Esophagus muscularis mucosa (tissue), 4 donors: ENCODE measurements at regions of chr19 and their contacts with region 1.

Region 1: DNA sequence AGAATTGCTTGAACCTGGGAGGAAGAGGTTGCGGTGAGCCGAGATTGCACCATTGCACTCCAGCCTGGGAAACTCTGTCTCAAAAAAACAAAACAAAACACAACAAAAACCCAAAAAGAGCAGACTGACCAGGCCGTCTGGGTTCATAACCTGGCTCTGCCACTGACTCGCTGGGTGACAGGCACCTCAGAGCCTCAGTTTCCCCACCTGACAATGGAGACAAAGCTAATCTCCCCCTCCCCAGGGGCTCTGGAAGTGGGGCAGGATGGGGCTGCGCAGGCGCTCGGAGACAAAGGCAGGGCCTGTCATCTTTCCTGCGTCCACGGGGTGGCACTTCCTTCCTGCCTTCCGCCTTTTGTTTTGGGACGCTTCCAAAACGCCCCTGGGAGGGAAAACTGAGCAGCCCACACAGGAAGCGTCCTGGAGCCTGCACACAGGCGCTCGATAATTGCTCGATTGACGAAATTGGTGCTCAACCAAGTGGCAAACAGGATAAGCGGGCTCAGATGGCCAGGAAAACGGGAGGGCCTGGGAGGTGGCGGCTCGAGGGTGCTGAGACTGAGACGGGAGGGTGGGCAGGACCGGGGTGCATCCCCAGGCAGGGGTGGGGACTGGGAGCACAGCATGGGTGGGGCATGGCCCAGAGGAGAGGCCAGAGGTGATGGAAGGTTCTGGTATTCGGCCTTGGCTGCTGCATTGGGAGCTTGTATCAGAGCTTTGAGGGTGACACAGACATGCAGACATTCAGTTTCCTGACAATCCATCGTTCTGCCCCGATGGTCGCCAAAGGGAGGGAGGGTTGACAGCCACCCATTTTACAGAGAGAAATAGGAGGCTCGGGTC is 17.8 kb downstream of the SPC24 start:
- DNase-seq: peak; percentile 98
- H3K4me3 ChIP-seq: peak overlapping the region; percentile 29 to 52 (median 42)
- H3K27ac ChIP-seq: peak overlapping the region; percentile 97 to 100 (median 98)
- H3K4me1 ChIP-seq: peaks cover 51 to 62% (median 60%) of the 10 kb centered on the region in 4 donors
- H3K27me3 ChIP-seq: no peaks in the 10 kb centered on the region
- CTCF ChIP-seq: peak in 2 of 3 experiments; percentile 93 to 95
- EP300 ChIP-seq: no peak
- POLR2A ChIP-seq: no peak

Region 2: DNA sequence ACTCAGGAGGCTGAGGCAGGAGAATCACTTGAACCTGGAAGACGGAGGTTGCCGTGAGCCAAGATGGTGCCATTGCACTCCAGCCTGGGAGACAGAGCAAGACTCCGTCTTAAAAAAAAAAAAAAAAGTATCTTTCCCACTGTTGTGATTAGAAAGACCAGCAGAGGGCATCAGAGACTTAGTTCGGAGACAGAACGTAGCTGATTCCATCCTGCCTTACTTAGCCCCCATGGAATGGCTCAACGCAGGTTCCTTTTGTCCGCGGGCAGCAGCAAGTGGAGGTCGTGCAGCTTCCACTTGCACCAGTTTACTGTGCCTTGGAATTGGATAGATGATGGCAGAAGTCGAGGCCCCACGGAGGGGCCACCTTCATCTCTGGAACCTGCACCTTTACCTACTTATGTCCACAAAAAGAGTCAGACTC is 201.1 kb before region 1 on chr19:
- intact Hi-C with region 1: loop called (anchors 10 kb)
- DNase-seq: no peak
- H3K4me3 ChIP-seq: peak overlapping the region in 2 of 4 donors; percentile 13 to 14
- H3K27ac ChIP-seq: peak overlapping the region in 1 of 4 donors; percentile 26
- H3K4me1 ChIP-seq: peaks cover 0 to 12% (median 10%) of the 10 kb centered on the region in 4 donors
- H3K27me3 ChIP-seq: no peaks in the 10 kb centered on the region
- CTCF ChIP-seq: peak; percentile 54 to 66 (median 66)
- EP300 ChIP-seq: no peak
- POLR2A ChIP-seq: no peak

Region 3: DNA sequence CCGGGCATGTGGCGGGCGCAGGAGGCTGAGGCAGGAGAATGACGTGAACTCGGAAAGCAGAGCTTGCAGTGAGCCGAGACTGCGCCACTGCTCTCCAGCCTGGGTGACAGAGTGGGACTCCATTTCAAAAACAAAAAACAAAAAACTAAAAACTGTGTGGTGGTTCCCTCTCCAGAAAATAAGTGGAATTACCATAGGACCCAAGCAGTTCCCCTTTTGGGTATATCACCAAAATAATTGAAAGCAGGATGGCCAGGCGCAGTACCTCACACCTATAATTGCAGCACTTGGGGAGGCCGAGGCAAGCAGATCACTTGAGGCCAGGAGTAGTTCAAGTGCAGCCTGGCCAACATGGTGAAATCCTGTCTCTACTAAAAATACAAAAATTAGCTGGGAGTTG is 64.2 kb before region 1 on chr19:
- intact Hi-C with region 1: no loop called
- DNase-seq: no peak
- H3K4me3 ChIP-seq: no peak overlapping the region
- H3K27ac ChIP-seq: no peak overlapping the region
- H3K4me1 ChIP-seq: peaks cover 0 to 5% (median 2%) of the 10 kb centered on the region in 4 donors
- H3K27me3 ChIP-seq: no peaks in the 10 kb centered on the region
- CTCF ChIP-seq: no peak
- EP300 ChIP-seq: no peak
- POLR2A ChIP-seq: no peak

Region 4: DNA sequence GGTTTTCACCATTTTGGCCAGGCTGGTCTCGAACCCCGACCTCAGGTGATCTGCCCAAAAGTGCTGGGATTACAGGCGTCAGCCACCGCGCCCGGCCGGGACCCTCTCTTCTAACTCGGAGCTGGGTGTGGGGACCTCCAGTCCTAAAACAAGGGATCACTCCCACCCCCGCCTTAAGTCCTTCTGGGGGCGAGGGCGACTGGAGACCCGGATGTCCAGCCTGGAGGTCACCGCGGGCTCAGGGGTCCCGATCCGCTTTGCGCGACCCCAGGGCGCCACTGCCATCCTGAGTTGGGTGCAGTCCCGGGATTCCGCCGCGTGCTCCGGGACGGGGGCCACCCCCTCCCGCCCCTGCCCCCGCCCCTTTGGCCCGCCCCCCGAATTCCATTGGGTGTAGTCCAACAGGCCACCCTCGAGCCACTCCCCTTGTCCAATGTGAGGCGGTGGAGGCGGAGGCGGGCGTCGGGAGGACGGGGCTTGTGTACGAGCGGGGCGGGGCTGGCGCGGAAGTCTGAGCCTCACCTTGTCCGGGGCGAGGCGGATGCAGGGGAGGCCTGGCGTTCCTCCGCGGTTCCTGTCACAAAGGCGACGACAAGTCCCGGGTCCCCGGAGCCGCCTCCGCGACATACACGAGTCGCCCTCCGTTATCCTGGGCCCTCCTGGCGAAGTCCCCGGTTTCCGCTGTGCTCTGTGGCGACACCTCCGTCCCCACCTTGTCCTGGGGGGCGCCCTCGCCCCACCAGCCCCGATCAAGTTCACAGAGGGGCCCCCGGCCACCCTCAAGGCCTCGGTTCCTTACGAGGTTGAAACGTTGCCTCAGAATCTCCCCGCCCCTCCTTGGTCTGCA is 47.5 kb before region 1 on chr19:
- intact Hi-C with region 1: loop called (anchors 5 kb)
- DNase-seq: peak; percentile 100
- H3K4me3 ChIP-seq: peak overlapping the region; percentile 67 to 79 (median 72)
- H3K27ac ChIP-seq: peak overlapping the region; percentile 97 to 99 (median 97)
- H3K4me1 ChIP-seq: peaks cover 56 to 82% (median 79%) of the 10 kb centered on the region in 4 donors
- H3K27me3 ChIP-seq: no peaks in the 10 kb centered on the region
- CTCF ChIP-seq: peak in 1 of 3 experiments; percentile 3
- EP300 ChIP-seq: no peak
- POLR2A ChIP-seq: peak; percentile 95

Region 5: GRCh38 chr19:11203194-11204075 is 65.7 kb after region 1 on chr19:
- intact Hi-C with region 1: loop called (anchors 1 kb)
- DNase-seq: peak; percentile 96
- H3K4me3 ChIP-seq: peak overlapping the region; percentile 33 to 49 (median 42)
- H3K27ac ChIP-seq: peak overlapping the region; percentile 89 to 96 (median 93)
- H3K4me1 ChIP-seq: peaks cover 35 to 71% (median 55%) of the 10 kb centered on the region in 4 donors
- H3K27me3 ChIP-seq: no peaks in the 10 kb centered on the region
- CTCF ChIP-seq: peak; percentile 90 to 97 (median 91)
- EP300 ChIP-seq: peak; percentile 20
- POLR2A ChIP-seq: no peak